CD4-positive, alpha-beta T cell (primary cell): ENCODE measurements at regions of chr9 and their contacts with region 1.

Region 1: GRCh38 chr9:27600256-27600655 is 27.0 kb upstream of the C9orf72 start:
- DNase-seq: no peak
- ATAC-seq: no peak
- H3K4me3 ChIP-seq: no peak overlapping the region
- H3K4me3 Mint-ChIP-seq: no peak overlapping the region
- H3K27ac ChIP-seq: no peak overlapping the region
- H3K27ac Mint-ChIP-seq: no peak overlapping the region
- H3K4me1 ChIP-seq: no peaks in the 10 kb centered on the region
- H3K4me1 Mint-ChIP-seq: no peaks in the 10 kb centered on the region
- H3K27me3 ChIP-seq: no peaks in the 10 kb centered on the region
- H3K27me3 Mint-ChIP-seq: no peaks in the 10 kb centered on the region
- CTCF ChIP-seq: no peak

Region 2: DNA sequence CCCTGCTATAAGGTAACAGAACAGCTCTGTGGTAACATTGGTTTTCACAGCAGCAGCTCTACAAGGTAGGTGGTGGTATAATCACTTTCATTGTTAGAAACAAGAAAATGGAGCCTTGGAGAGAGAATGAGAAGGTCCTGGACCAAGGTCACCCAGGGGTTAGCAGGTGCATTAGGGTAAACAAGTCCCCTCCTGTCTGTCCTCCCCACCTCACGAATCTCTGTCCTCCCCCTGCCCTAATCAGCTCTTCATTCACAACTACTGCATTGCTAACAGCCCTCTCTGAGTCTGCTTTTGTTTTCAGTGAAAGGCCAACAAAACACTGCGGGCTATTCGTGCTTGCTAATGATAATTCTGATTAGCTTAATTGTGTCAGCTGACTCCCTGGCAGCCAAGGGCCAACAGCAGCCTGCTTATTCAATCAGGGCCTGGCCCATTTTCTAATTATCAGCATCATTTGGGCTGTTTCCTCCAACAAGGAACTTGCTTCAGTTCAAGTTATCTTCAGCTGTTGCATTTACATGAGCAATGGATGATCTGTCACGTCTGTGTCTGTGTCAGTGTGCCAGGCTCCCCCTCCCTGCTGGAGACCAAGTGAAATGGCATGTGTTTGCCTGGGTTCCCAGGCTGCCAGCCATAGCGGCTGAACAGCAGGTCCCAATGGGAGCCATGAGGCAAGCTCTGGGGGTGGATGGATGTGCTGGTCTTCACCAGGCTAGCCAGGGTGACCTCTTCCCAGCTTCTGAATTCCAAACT is 246.6 kb before region 1 on chr9:
- CTCF ChIA-PET with region 1: no interaction called
- POLR2A ChIA-PET with region 1: no interaction called
- intact Hi-C with region 1: no loop called
- DNase-seq: no peak
- ATAC-seq: no peak
- H3K4me3 ChIP-seq: no peak overlapping the region
- H3K4me3 Mint-ChIP-seq: no peak overlapping the region
- H3K27ac ChIP-seq: no peak overlapping the region
- H3K27ac Mint-ChIP-seq: no peak overlapping the region
- H3K4me1 ChIP-seq: peaks cover 2% of the 10 kb centered on the region
- H3K4me1 Mint-ChIP-seq: peaks cover 7% of the 10 kb centered on the region
- H3K27me3 ChIP-seq: no peaks in the 10 kb centered on the region
- H3K27me3 Mint-ChIP-seq: no peaks in the 10 kb centered on the region
- CTCF ChIP-seq: no peak

Region 3: GRCh38 chr9:27554712-27555111 is 45.5 kb before region 1 on chr9:
- CTCF ChIA-PET with region 1: interaction called, 3 read pairs
- POLR2A ChIA-PET with region 1: no interaction called
- intact Hi-C with region 1: loop called in 1 of 2 experiments (anchors 5 kb)
- DNase-seq: no peak
- ATAC-seq: no peak
- H3K4me3 ChIP-seq: no peak overlapping the region
- H3K4me3 Mint-ChIP-seq: no peak overlapping the region
- H3K27ac ChIP-seq: no peak overlapping the region
- H3K27ac Mint-ChIP-seq: no peak overlapping the region
- H3K4me1 ChIP-seq: no peaks in the 10 kb centered on the region
- H3K4me1 Mint-ChIP-seq: no peaks in the 10 kb centered on the region
- H3K27me3 ChIP-seq: no peaks in the 10 kb centered on the region
- H3K27me3 Mint-ChIP-seq: no peaks in the 10 kb centered on the region
- CTCF ChIP-seq: no peak

Region 4: DNA sequence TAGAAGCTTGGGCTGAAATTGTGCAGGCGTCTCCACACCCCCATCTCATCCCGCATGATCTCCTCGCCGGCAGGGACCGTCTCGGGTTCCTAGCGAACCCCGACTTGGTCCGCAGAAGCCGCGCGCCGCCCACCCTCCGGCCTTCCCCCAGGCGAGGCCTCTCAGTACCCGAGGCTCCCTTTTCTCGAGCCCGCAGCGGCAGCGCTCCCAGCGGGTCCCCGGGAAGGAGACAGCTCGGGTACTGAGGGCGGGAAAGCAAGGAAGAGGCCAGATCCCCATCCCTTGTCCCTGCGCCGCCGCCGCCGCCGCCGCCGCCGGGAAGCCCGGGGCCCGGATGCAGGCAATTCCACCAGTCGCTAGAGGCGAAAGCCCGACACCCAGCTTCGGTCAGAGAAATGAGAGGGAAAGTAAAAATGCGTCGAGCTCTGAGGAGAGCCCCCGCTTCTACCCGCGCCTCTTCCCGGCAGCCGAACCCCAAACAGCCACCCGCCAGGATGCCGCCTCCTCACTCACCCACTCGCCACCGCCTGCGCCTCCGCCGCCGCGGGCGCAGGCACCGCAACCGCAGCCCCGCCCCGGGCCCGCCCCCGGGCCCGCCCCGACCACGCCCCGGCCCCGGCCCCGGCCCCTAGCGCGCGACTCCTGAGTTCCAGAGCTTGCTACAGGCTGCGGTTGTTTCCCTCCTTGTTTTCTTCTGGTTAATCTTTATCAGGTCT is 27.2 kb before region 1 on chr9 and contains the start of gene C9orf72:
- CTCF ChIA-PET with region 1: no interaction called
- POLR2A ChIA-PET with region 1: no interaction called
- intact Hi-C with region 1: no loop called
- DNase-seq: peak; percentile 80 to 94 (median 88)
- ATAC-seq: peak; percentile 57
- H3K4me3 ChIP-seq: peak within 1 kb of the TSS; percentile 86
- H3K4me3 Mint-ChIP-seq: peak within 1 kb of the TSS; percentile 98
- H3K27ac ChIP-seq: peak within 1 kb of the TSS; percentile 96 to 99
- H3K27ac Mint-ChIP-seq: peak within 1 kb of the TSS; percentile 98
- H3K4me1 ChIP-seq: peaks cover 18% of the 10 kb centered on the region
- H3K4me1 Mint-ChIP-seq: peaks cover 36% of the 10 kb centered on the region
- H3K27me3 ChIP-seq: no peaks in the 10 kb centered on the region
- H3K27me3 Mint-ChIP-seq: peaks cover 5% of the 10 kb centered on the region
- CTCF ChIP-seq: no peak
- total RNA-seq, gene C9orf72: 36.9 to 39.2 TPM

Region 5: GRCh38 chr9:27749838-27750237 is 149.6 kb after region 1 on chr9:
- CTCF ChIA-PET with region 1: no interaction called
- POLR2A ChIA-PET with region 1: no interaction called
- intact Hi-C with region 1: no loop called
- DNase-seq: no peak
- ATAC-seq: no peak
- H3K4me3 ChIP-seq: no peak overlapping the region
- H3K4me3 Mint-ChIP-seq: no peak overlapping the region
- H3K27ac ChIP-seq: no peak overlapping the region
- H3K27ac Mint-ChIP-seq: no peak overlapping the region
- H3K4me1 ChIP-seq: no peaks in the 10 kb centered on the region
- H3K4me1 Mint-ChIP-seq: no peaks in the 10 kb centered on the region
- H3K27me3 ChIP-seq: no peaks in the 10 kb centered on the region
- H3K27me3 Mint-ChIP-seq: peaks cover 12% of the 10 kb centered on the region
- CTCF ChIP-seq: no peak